K562 (cell line): ENCODE measurements at regions of chr11 and their contacts with region 1.

Region 1: DNA sequence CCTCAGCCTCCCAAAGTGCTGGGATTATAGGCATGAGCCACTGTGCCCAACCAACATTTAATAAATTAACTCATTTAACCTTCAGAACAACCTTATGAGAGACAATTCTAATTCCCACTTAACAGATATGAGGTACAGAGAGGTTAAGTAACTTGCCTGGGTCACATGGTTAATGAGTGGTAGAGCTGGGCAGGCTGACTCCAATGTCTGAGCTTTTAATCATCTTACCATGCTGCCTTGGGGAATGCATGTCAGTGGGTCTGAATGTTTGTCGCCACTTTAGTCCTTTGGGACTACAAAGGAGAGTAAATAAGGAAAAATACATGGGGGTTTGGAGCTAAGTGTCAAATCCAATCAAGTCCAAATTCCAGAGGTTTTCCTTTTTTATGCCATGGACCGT is 11.2 kb upstream of the PIK3C2A start:
- DNase-seq: no peak
- ATAC-seq: no peak
- H3K4me3 ChIP-seq: no peak overlapping the region
- H3K27ac ChIP-seq: no peak overlapping the region
- H3K4me1 ChIP-seq: no peaks in the 10 kb centered on the region
- H3K27me3 ChIP-seq: no peaks in the 10 kb centered on the region
- CTCF ChIP-seq: no peak
- EP300 ChIP-seq: no peak
- POLR2A ChIP-seq: no peak
- RAD21 ChIP-seq: no peak

Region 2: GRCh38 chr11:16958833-16959232 is 260.2 kb before region 1 on chr11:
- CTCF ChIA-PET with region 1: no interaction called
- POLR2A ChIA-PET with region 1: no interaction called
- in situ Hi-C with region 1: loop called (anchors 10 kb)
- intact Hi-C with region 1: no loop called
- DNase-seq: no peak
- ATAC-seq: no peak
- H3K4me3 ChIP-seq: no peak overlapping the region
- H3K27ac ChIP-seq: no peak overlapping the region
- H3K4me1 ChIP-seq: no peaks in the 10 kb centered on the region; a peak in 1 of 5 replicates
- H3K27me3 ChIP-seq: peaks cover 11 to 20% of the 10 kb centered on the region in 2 experiments; a peak in 4 of 5 replicates
- CTCF ChIP-seq: no peak
- EP300 ChIP-seq: no peak
- POLR2A ChIP-seq: no peak
- RAD21 ChIP-seq: no peak

Region 3: GRCh38 chr11:17207317-17208258 is 11.4 kb before region 1 on chr11 and contains the start of gene PIK3C2A:
- CTCF ChIA-PET with region 1: no interaction called
- POLR2A ChIA-PET with region 1: interaction called, 13 read pairs
- in situ Hi-C with region 1: no loop called
- intact Hi-C with region 1: no loop called
- DNase-seq: peak; percentile 92 to 97 (median 93)
- ATAC-seq: peak; percentile 96
- H3K4me3 ChIP-seq: peak within 1 kb of the TSS; percentile 87
- H3K27ac ChIP-seq: peak within 1 kb of the TSS; percentile 76
- H3K4me1 ChIP-seq: peaks cover 11 to 13% of the 10 kb centered on the region in 2 experiments; a peak in 4 of 5 replicates
- H3K27me3 ChIP-seq: no peaks in the 10 kb centered on the region
- CTCF ChIP-seq: no peak
- EP300 ChIP-seq: no peak
- POLR2A ChIP-seq: peak; percentile 93
- RAD21 ChIP-seq: no peak
- polyA plus RNA-seq, gene PIK3C2A: 3.1 to 4.1 TPM

Region 4: DNA sequence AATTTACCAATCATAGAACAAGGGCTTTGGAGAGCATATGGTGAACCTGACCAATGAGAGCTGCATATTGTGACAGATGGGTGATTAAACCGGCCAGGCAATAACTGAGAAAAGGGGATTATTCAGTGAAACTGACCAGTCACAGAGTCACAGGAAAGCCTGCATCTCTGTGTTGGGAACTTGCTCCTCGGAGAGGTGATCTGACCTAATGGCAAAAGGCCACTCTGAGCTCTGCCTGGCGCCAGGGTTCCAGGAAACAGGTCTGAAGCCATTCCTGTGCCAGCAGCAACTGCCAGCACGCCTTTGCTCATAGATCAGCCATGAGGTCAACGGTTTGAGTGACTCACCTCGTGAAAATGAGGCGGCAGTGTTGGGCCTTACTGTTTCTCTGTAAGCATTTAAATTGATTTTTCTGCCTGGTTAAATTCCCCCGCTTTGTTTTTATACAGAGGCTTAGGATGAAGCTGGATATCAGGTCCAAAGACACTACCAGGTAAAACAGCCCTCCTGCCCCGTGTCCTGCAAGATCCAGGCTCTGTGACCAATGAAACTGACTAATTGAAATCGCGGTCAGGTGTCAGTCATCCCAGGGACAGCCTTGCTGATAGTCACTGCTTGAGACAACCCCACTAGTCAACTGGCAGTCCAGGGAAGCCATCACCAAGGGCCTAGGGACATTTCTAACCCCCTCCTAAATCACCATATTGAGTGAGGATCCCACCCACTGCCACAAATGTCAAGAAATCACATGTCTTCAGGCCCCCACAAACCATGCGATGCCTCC is 464.6 kb after region 1 on chr11:
- CTCF ChIA-PET with region 1: no interaction called
- POLR2A ChIA-PET with region 1: no interaction called
- in situ Hi-C with region 1: no loop called
- intact Hi-C with region 1: no loop called
- DNase-seq: no peak
- ATAC-seq: no peak
- H3K4me3 ChIP-seq: no peak overlapping the region
- H3K27ac ChIP-seq: no peak overlapping the region
- H3K4me1 ChIP-seq: no peaks in the 10 kb centered on the region
- H3K27me3 ChIP-seq: peaks cover 24 to 43% of the 10 kb centered on the region in 2 experiments
- CTCF ChIP-seq: no peak
- EP300 ChIP-seq: no peak
- POLR2A ChIP-seq: no peak
- RAD21 ChIP-seq: no peak